ENCODE measurements at regions of chr11 and their contacts with region 1.

Region 1: GRCh38 chr11:74948898-74949747 is at the starts of genes SPCS2 and XRRA1:
- DNase-seq: peak; percentile 99
- ATAC-seq: peak; percentile 98 to 99
- H3K4me3 ChIP-seq: peak within 1 kb of the TSS; percentile 81 to 94 (median 89)
- H3K27ac ChIP-seq: peak within 1 kb of the TSS; percentile 92 to 97 (median 92)
- H3K4me1 ChIP-seq: peaks cover 39 to 41% of the 10 kb centered on the region in 2 donors
- H3K27me3 ChIP-seq: no peaks in the 10 kb centered on the region
- CTCF ChIP-seq: no peak
- POLR2A ChIP-seq: peak; percentile 84 to 89
- total RNA-seq, gene SPCS2: 16.9 to 38.3 (median 22.8) TPM
- total RNA-seq, gene XRRA1: 7.8 to 16.8 (median 8.8) TPM

Region 2: DNA sequence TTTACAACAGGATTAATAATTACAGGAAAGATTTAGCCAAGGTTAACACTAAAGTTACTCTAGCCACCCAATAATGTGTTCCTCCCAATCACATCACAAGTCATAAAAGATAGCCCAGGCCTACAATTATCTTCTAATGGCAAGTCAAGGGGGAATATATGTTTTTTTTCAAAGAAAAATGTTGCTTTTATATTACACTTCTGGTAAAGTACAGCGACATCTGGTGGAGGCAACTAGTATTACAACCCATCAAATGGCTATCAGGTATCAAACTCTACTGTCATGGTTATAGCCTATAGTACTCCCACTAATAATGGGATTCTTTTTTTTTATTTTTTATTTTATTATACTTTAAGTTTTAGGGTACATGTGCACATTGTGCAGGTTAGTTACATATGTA is 72.0 kb before region 1 on chr11:
- in situ Hi-C with region 1: no loop called
- intact Hi-C with region 1: no loop called
- DNase-seq: no peak
- ATAC-seq: no peak
- H3K4me3 ChIP-seq: no peak overlapping the region
- H3K27ac ChIP-seq: no peak overlapping the region
- H3K4me1 ChIP-seq: no peaks in the 10 kb centered on the region
- H3K27me3 ChIP-seq: no peaks in the 10 kb centered on the region
- CTCF ChIP-seq: peak; percentile 22 to 44 (median 33)
- POLR2A ChIP-seq: no peak

Region 3: DNA sequence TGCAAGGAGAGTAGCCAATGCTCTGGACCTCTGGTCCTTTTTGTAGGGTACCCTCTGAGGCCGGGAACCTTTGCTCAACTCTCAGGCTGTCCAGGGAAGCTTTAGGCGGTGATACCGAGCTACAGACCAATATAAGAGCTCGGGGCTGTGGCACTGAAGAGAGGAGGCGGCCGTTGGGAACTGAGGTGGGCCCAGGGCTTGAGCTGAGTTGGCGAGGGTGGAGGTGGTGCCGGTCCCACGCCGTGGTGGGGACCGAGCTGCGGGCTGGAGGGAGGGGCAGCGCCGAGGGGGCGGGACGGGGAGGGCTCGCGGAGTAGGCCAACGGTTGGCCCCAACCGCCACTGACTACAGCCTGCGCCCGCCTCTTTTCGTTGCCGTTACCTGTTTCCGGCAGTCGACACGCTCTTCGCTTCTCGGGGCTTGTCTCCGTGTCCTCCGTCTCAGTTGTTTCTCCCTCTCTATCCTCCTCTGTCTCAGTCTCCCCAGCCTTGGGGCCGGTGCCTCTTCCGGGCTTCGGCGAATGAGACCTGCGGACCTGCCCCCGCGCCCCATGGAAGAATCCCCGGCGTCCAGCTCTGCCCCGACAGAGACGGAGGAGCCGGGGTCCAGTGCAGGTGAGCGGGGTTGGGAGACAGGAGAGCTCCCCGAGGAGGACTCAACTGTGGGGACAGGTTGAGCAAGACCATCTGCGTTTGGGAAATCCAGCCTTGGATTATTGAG is 39.6 kb after region 1 on chr11 and contains the start of gene NEU3:
- in situ Hi-C with region 1: no loop called
- intact Hi-C with region 1: loop called (anchors 2 kb)
- DNase-seq: peak; percentile 77 to 78
- ATAC-seq: peak; percentile 89 to 91
- H3K4me3 ChIP-seq: peak within 1 kb of the TSS; percentile 66 to 95 (median 91)
- H3K27ac ChIP-seq: peak within 1 kb of the TSS; percentile 88 to 96 (median 96)
- H3K4me1 ChIP-seq: peaks cover 42 to 45% of the 10 kb centered on the region in 2 donors
- H3K27me3 ChIP-seq: no peaks in the 10 kb centered on the region
- CTCF ChIP-seq: no peak
- POLR2A ChIP-seq: peak; percentile 77 to 80
- total RNA-seq, gene NEU3: 11.0 to 20.6 (median 18.3) TPM

Region 4: DNA sequence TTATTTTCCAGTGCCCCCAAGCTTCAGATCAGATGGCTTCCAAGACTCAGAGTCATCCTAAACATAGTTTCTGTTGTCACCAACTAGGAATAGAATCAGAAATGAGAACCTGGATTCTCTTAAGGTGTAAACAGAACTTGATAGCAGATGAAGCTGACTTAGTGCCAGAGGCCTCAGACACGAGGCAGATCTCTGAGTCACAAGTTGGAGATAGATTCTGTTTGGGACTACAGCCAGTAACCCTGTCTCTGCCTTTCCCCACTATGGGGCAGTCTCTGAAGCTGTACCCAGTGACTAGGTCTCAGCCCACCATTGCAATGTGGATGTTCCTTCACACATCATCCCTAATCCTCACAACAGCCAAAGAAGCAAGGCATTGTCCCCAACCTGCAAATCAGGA is 65.0 kb after region 1 on chr11:
- in situ Hi-C with region 1: no loop called
- intact Hi-C with region 1: loop called (anchors 1 kb)
- DNase-seq: peak; percentile 75 to 90
- ATAC-seq: peak; percentile 95
- H3K4me3 ChIP-seq: no peak overlapping the region
- H3K27ac ChIP-seq: peak overlapping the region; percentile 89 to 97 (median 92)
- H3K4me1 ChIP-seq: peaks cover 62 to 63% of the 10 kb centered on the region in 2 donors
- H3K27me3 ChIP-seq: no peaks in the 10 kb centered on the region
- CTCF ChIP-seq: peak in 1 of 5 experiments; percentile 16
- POLR2A ChIP-seq: no peak

Region 5: GRCh38 chr11:75022759-75023396 is 73.8 kb after region 1 on chr11:
- in situ Hi-C with region 1: loop called in 1 of 4 experiments (anchors 5 kb)
- intact Hi-C with region 1: no loop called
- DNase-seq: peak; percentile 49 to 82
- ATAC-seq: peak; percentile 79 to 92
- H3K4me3 ChIP-seq: no peak overlapping the region
- H3K27ac ChIP-seq: peak overlapping the region; percentile 3 to 60 (median 8)
- H3K4me1 ChIP-seq: peaks cover 30 to 42% of the 10 kb centered on the region in 2 donors
- H3K27me3 ChIP-seq: no peaks in the 10 kb centered on the region
- CTCF ChIP-seq: peak; percentile 86 to 96 (median 89)
- POLR2A ChIP-seq: no peak

Region 6: GRCh38 chr11:75087319-75088305 is 138.5 kb after region 1 on chr11:
- in situ Hi-C with region 1: no loop called
- intact Hi-C with region 1: no loop called
- DNase-seq: no peak
- ATAC-seq: no peak
- H3K4me3 ChIP-seq: no peak overlapping the region
- H3K27ac ChIP-seq: no peak overlapping the region
- H3K4me1 ChIP-seq: no peaks in the 10 kb centered on the region
- H3K27me3 ChIP-seq: peaks cover 0 to 3% (median 0%) of the 10 kb centered on the region in 3 donors
- CTCF ChIP-seq: no peak
- POLR2A ChIP-seq: no peak

Region 7: DNA sequence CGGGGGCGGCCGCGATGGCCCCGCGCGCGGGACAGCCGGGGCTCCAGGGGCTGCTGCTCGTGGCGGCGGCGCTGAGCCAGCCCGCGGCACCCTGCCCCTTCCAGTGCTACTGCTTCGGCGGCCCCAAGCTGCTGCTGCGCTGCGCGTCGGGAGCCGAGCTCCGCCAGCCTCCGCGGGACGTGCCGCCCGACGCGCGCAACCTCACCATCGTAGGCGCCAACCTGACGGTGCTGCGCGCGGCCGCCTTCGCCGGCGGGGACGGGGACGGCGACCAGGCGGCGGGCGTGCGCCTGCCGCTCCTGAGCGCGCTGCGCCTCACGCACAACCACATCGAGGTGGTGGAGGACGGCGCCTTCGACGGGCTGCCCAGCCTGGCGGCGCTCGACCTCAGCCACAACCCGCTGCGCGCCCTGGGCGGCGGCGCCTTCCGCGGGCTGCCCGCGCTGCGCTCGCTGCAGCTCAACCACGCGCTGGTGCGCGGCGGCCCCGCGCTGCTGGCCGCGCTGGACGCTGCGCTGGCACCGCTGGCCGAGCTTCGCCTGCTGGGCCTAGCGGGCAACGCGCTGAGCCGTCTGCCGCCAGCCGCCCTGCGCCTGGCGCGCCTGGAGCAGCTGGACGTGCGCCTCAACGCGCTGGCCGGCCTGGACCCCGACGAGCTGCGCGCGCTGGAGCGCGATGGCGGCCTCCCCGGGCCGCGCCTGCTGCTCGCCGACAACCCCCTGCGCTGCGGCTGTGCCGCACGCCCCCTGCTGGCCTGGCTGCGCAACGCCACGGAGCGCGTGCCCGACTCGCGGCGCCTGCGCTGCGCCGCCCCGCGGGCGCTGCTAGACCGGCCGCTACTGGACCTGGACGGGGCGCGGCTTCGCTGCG is 292.1 kb after region 1 on chr11:
- in situ Hi-C with region 1: loop called in 1 of 4 experiments (anchors 25 kb)
- intact Hi-C with region 1: no loop called
- DNase-seq: peak; percentile 23 to 61
- ATAC-seq: peak; percentile 94 to 95
- H3K4me3 ChIP-seq: peak overlapping the region in 3 of 4 donors; percentile 35 to 46 (median 43)
- H3K27ac ChIP-seq: no peak overlapping the region
- H3K4me1 ChIP-seq: peaks cover 0 to 6% of the 10 kb centered on the region in 2 donors
- H3K27me3 ChIP-seq: peaks cover 27 to 28% (median 27%) of the 10 kb centered on the region in 3 donors
- CTCF ChIP-seq: peak in 4 of 5 experiments; percentile 89 to 99 (median 94)
- POLR2A ChIP-seq: no peak

Region 8: DNA sequence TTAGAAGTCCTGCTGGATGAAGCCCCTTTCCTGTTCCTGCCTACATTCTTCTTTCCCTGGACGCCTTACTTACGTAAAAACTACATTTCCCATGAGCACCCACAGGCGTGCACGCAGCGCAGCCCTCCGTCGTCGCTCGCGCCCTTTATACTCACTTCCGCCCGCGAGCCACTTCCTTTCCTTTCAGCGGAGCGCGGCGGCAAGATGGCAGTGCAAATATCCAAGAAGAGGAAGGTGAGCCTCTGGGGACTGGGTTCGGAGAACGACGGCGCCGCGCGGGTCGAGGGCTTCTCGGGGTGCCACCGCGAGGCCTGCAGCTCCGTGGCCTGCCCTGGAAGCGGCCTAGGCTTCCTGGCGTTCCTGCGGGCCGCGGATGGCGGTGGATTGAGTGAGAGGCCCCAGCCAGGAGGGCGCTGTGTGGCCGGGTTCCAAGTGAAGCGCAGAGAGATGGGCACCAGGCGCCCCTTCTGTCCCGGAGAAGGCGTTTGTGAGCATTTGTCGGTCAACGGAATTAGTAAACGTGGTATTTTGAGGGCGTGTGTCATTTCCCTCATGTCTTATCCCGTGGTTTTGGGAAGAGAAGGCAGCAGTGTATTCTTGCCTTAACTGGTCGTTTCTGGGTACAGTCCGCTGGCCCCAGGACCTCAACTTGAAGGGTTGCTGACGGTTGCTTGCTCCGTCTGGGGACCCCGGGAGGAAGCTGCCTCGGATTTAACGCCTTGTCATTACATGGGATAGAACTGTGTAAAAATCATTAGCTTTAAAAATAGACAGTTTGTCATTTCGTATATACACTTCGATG is 450.4 kb after region 1 on chr11 and contains the start of gene RPS3:
- in situ Hi-C with region 1: no loop called
- intact Hi-C with region 1: no loop called
- DNase-seq: peak; percentile 87 to 92
- ATAC-seq: peak; percentile 84 to 94
- H3K4me3 ChIP-seq: peak within 1 kb of the TSS; percentile 82 to 99 (median 87)
- H3K27ac ChIP-seq: peak within 1 kb of the TSS; percentile 90 to 98 (median 92)
- H3K4me1 ChIP-seq: peaks cover 32% of the 10 kb centered on the region in 2 donors
- H3K27me3 ChIP-seq: no peaks in the 10 kb centered on the region
- CTCF ChIP-seq: peak in 2 of 5 experiments; percentile 26 to 28
- POLR2A ChIP-seq: peak; percentile 92
- total RNA-seq, gene RPS3: 572 to 979 (median 746) TPM

Measured in gastrocnemius medialis (tissue), 4 donors.